ENCODE measurements at regions of chr15 and their contacts with region 1.

Region 1: GRCh38 chr15:65101411-65101890 is 13.5 kb downstream of the UBAP1L start:
- H3K4me3 Mint-ChIP-seq: peak overlapping the region; percentile 52
- H3K27ac Mint-ChIP-seq: peak overlapping the region; percentile 84
- H3K4me1 Mint-ChIP-seq: peaks cover 16% of the 10 kb centered on the region
- H3K27me3 Mint-ChIP-seq: no peaks in the 10 kb centered on the region

Region 2: DNA sequence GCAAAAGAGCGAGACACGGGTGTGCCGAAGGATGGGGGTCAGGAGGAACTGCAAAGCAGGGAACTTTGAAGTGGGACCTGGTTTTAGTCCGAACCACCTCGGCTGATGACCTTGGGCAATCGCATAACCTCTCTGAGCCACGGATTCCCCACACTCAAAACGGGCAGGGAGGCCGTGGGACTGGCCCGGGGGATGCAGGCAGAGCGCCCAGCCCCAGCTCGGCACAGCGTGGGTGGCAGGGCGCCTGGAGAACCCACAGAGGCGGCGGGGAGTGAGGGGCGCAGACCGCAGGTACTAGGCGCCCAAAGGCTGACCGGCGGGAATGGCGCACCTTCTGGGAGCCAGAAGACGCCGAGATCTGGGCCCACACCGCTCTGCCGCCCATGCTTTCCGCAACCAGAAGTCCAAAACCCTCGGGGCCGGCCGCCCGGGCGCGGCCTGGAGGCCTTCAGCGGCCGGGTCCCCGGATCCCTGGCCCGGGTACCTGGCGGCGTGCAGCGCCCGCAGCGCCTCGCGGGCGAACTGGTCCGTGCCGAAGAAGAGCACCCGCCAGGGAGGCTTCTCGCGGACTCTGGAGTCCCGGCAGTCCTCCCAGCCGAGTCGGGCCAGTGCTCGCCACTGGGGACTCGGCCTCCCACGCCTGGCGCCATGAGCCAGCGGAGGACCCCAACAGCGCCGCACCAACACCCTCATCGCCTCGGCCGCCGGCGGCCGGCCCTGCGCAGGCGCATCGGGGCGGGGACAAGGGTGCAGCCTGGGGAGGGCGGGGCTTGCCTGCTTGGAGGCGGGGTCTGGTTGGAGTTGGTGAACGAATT is 72.3 kb before region 1 on chr15 and contains the start of gene MTFMT:
- intact Hi-C with region 1: loop called (anchors 2 kb)
- H3K4me3 Mint-ChIP-seq: peak within 1 kb of the TSS; percentile 86
- H3K27ac Mint-ChIP-seq: peak within 1 kb of the TSS; percentile 80
- H3K4me1 Mint-ChIP-seq: peaks cover 44% of the 10 kb centered on the region
- H3K27me3 Mint-ChIP-seq: peaks cover 19% of the 10 kb centered on the region

Region 3: DNA sequence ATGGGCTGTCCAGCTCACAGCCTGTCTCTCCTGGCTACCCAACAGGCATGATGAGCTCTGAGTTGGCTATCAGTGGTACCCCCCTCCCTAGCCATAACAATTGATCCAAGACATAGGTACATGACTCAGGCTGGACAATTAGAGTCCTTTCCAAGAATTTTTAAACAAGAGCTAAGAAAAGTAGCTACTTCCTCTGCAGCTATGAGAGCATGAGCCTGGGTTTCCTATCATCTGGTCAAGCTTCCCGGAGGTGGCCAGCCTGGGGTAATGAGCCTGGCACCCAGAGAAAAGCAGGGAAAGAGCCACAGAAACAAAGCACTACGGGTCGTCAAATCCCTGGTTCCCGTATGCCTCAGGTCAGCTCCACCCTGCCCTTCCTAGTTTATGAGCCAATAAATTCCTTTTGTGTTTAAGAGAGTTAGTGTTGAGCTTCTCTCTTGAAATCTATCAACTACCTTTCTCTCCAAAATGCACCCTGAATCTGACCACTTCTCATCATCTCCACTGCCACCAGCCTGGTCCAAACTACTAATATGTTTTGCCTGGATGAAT is 58.6 kb before region 1 on chr15:
- intact Hi-C with region 1: no loop called
- H3K4me3 Mint-ChIP-seq: no peak overlapping the region
- H3K27ac Mint-ChIP-seq: no peak overlapping the region
- H3K4me1 Mint-ChIP-seq: peaks cover 22% of the 10 kb centered on the region
- H3K27me3 Mint-ChIP-seq: peaks cover 10% of the 10 kb centered on the region

Region 4: GRCh38 chr15:65054333-65055200 is 46.9 kb before region 1 on chr15:
- intact Hi-C with region 1: loop called (anchors 1 kb)
- H3K4me3 Mint-ChIP-seq: no peak overlapping the region
- H3K27ac Mint-ChIP-seq: no peak overlapping the region
- H3K4me1 Mint-ChIP-seq: peaks cover 11% of the 10 kb centered on the region
- H3K27me3 Mint-ChIP-seq: peaks cover 19% of the 10 kb centered on the region